ENCODE measurements at regions of chr6 and their contacts with region 1.

Region 1: DNA sequence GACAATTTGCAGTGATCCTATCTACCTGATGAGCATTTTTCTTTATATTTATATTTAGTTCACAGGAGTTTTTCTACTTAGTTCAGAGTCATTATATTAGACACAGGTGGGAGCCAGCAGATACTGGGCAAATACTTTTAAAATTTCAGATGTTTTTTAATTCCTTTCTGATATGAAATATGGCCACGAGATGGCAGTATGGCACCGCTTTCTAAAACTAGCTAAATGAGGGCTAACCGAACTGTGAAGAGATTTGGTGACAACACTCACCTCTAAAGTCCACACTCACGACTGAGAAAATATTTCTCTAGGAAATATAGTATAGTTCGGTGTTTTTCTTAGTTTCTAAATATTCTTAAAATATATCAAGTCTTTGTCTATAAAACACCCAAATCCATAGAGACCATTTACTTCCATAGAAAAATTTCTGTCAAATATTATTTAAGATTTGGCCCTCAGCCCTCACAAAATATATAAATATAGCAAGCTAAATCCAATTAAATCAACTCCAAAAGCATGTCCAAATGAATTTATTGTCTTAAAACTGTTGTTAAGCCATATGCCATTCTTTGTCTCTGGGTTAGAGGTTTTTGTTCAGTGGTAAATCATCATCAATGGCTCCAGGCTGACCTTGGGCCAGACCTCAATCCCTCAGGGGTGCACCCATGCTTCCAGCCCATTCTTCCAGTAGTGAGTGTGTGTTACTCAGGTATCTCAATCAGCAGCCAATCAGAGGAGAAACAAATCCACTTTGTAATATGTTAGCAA is 63.6 kb downstream of the HUS1B start:
- DNase-seq: peak in 3 of 5 donors; percentile 41 to 51 (median 44)
- ATAC-seq: no peak
- H3K4me3 ChIP-seq: no peak overlapping the region
- H3K27ac ChIP-seq: peak overlapping the region in 1 of 12 donors; percentile 45
- H3K4me1 ChIP-seq: peaks cover 0 to 3% (median 0%) of the 10 kb centered on the region in 12 donors
- H3K27me3 ChIP-seq: no peaks in the 10 kb centered on the region
- CTCF ChIP-seq: peak; percentile 67 to 82 (median 75)
- POLR2A ChIP-seq: no peak

Region 2: DNA sequence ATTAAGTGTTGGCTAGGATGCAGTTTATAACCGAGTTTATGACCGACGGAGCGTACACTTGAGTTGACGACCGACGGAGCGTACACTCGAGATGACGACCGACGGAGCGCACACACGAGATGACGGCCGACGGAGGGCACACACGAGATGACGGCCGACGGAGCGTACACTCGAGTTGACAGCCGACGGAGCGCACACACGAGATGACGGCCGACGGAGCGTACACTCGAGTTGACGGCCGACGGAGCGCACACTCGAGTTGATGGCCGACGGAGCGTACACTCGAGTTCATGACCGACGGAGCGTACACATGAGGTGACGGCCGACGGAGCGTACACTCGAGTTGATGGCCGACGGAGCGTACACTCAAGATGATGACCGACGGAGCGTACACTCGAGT is 56.2 kb before region 1 on chr6:
- intact Hi-C with region 1: no loop called
- DNase-seq: no peak
- ATAC-seq: no peak
- H3K4me3 ChIP-seq: no peak overlapping the region
- H3K27ac ChIP-seq: no peak overlapping the region
- H3K4me1 ChIP-seq: no peaks in the 10 kb centered on the region
- H3K27me3 ChIP-seq: no peaks in the 10 kb centered on the region
- CTCF ChIP-seq: no peak
- POLR2A ChIP-seq: no peak

Region 3: GRCh38 chr6:650098-650497 is 56.8 kb after region 1 on chr6:
- intact Hi-C with region 1: no loop called
- DNase-seq: no peak
- ATAC-seq: no peak
- H3K4me3 ChIP-seq: no peak overlapping the region
- H3K27ac ChIP-seq: no peak overlapping the region
- H3K4me1 ChIP-seq: peaks cover 0 to 5% (median 0%) of the 10 kb centered on the region in 12 donors
- H3K27me3 ChIP-seq: no peaks in the 10 kb centered on the region
- CTCF ChIP-seq: no peak
- POLR2A ChIP-seq: no peak

Region 4: GRCh38 chr6:683742-684440 is 90.6 kb after region 1 on chr6:
- intact Hi-C with region 1: loop called in 1 of 10 experiments (anchors 10 kb)
- DNase-seq: no peak
- ATAC-seq: peak; percentile 51 to 69 (median 61)
- H3K4me3 ChIP-seq: peak overlapping the region in 8 of 12 donors; percentile 1 to 38 (median 28)
- H3K27ac ChIP-seq: peak overlapping the region in 3 of 12 donors; percentile 3 to 45 (median 15)
- H3K4me1 ChIP-seq: peaks cover 0 to 31% (median 6%) of the 10 kb centered on the region in 12 donors
- H3K27me3 ChIP-seq: no peaks in the 10 kb centered on the region
- CTCF ChIP-seq: no peak
- POLR2A ChIP-seq: no peak

Region 5: GRCh38 chr6:786946-787763 is 193.8 kb after region 1 on chr6:
- intact Hi-C with region 1: loop called in 9 of 10 experiments (anchors 1 to 10 kb)
- DNase-seq: no peak
- ATAC-seq: no peak
- H3K4me3 ChIP-seq: no peak overlapping the region
- H3K27ac ChIP-seq: no peak overlapping the region
- H3K4me1 ChIP-seq: no peaks in the 10 kb centered on the region
- H3K27me3 ChIP-seq: peaks cover 0 to 43% (median 4%) of the 10 kb centered on the region in 9 donors
- CTCF ChIP-seq: peak; percentile 29 to 64 (median 56)
- POLR2A ChIP-seq: no peak

Region 6: DNA sequence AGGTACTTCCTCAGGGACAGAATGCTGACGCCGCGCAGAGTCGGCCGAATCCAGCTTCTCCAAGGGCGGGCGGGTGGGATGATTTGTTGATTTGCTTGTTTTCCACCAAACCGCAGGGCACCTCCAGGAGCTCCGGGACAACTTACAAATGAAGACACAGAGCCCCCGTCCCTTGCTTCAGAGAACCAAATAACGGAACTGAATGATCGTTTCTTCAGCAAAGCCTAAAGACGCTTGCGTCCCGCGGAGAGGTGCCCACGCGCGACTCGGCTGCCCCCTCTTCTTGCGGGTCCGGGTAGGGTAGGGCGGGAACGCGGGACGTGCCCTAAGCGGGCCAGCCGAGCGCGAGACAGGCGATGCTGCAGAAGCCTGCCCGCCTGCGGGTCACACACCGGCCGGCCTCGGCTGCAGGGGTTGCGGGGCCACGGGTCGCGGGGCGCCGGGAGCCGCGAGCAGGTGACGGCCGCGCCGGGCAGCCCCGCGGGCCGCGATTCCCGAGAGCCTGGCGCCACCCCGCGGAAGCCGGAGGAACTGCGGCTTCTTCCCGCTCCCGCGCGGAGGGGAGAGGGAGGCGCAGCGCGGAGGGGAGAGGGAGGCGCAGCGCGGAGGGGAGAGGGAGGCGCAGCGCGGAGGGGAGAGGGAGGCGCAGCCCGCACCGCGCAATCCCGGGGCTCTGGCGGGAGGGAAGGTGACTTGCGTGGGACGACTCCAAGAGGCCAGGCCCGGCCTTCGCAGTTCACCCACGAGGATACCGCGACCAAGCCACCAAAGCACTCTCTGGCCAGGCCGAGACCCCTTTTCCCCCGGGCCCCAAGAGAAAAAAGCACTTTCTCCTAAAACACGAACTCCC is 788.4 kb after region 1 on chr6:
- intact Hi-C with region 1: loop called in 6 of 10 experiments (anchors 5 to 10 kb)
- DNase-seq: peak in 1 of 5 donors; percentile 47
- ATAC-seq: peak; percentile 26 to 87 (median 70)
- H3K4me3 ChIP-seq: peak overlapping the region in 10 of 12 donors; percentile 10 to 46 (median 37)
- H3K27ac ChIP-seq: peak overlapping the region in 1 of 12 donors; percentile 84
- H3K4me1 ChIP-seq: peaks cover 0 to 50% (median 26%) of the 10 kb centered on the region in 12 donors
- H3K27me3 ChIP-seq: peaks cover 88 to 100% (median 97%) of the 10 kb centered on the region in 9 donors
- CTCF ChIP-seq: peak; percentile 62 to 94 (median 90)
- POLR2A ChIP-seq: no peak

Region 7: DNA sequence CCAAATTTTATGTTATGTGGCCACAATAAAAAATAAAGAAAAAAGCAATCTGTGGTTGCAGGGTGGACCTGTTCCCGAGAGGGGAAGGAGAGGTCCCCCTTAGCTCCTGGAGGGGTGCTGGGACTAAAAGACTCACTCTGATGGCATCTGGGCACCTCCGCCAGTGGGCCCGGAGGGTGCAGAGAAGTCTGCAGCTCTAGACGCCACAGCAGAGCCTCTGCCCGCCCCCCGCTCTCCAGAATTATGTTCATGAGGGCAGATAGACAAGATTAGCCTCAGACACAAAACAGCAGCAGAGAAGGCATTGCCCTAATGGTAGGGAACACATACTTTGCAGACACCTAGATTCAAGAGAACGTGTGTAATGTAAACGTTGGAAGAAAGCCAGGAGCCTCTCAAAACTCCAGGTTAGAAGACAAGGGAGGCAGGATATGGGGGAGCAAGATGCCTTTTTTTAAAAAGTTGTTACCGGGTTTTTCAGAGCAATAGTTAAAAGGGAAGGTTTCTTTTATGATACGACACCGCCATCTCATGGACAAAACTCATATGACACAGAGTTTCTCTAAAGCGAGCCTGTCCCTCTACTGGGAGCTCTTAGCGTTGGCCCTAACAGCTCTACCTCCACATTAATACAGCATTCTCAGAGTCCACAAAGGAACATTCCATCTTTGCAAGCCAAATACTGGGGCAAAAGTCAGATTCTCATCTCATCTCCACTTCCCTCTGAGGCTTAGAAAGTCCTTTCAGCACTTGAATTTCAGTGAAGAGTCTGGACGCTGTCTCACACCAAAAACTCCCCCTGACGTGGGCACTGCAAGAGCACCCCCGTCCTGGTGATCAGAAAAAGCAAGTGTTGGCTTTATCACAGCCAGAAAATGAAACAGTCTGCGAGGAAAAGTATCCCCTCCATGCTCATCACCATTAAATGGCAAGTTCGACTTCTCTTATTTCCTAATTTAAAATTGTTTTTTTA is 843.3 kb after region 1 on chr6:
- intact Hi-C with region 1: loop called in 7 of 10 experiments (anchors 5 to 10 kb)
- DNase-seq: no peak
- ATAC-seq: peak; percentile 69 to 84 (median 80)
- H3K4me3 ChIP-seq: no peak overlapping the region
- H3K27ac ChIP-seq: no peak overlapping the region
- H3K4me1 ChIP-seq: peaks cover 0 to 5% (median 0%) of the 10 kb centered on the region in 12 donors
- H3K27me3 ChIP-seq: peaks cover 0 to 54% (median 23%) of the 10 kb centered on the region in 9 donors
- CTCF ChIP-seq: peak; percentile 63 to 81 (median 72)
- POLR2A ChIP-seq: no peak